Activated CD4-positive, alpha-beta T cell treated with anti-CD3 and anti-CD28 coated beads for 36 hours (primary cell): ENCODE measurements at regions of chrX and their contacts with region 1.

Region 1: DNA sequence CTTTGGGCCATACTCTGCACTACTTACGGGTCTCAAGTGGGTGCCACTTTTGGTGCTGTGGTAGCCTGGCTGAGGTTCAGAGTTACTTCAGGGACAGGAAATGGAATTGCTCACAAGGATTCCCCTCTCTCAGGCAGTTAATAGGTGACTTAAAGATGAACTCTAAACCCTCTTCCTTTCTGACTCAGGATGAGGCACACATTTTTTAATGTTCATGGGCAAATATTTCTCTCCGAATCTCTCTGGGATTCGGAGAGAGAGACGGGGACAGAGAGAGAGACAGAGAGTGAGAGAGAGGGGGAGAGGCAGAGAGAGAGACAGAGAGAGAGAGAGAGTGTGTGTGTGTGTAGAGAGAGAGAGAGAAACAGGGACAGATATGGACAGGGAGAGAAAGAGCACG is 79.8 kb downstream of the NYX start:
- DNase-seq: peak; percentile 11
- ATAC-seq: peak; percentile 72
- H3K4me3 Mint-ChIP-seq: no peak overlapping the region
- H3K27ac Mint-ChIP-seq: peak overlapping the region; percentile 77
- H3K4me1 Mint-ChIP-seq: peaks cover 10% of the 10 kb centered on the region
- H3K27me3 Mint-ChIP-seq: no peaks in the 10 kb centered on the region

Region 2: GRCh38 chrX:41293269-41293668 is 233.7 kb before region 1 on chrX:
- CTCF ChIA-PET with region 1: no interaction called
- POLR2A ChIA-PET with region 1: no interaction called
- intact Hi-C with region 1: no loop called
- DNase-seq: peak; percentile 33
- ATAC-seq: peak; percentile 57
- H3K4me3 Mint-ChIP-seq: no peak overlapping the region
- H3K27ac Mint-ChIP-seq: no peak overlapping the region
- H3K4me1 Mint-ChIP-seq: no peaks in the 10 kb centered on the region
- H3K27me3 Mint-ChIP-seq: no peaks in the 10 kb centered on the region

Region 3: DNA sequence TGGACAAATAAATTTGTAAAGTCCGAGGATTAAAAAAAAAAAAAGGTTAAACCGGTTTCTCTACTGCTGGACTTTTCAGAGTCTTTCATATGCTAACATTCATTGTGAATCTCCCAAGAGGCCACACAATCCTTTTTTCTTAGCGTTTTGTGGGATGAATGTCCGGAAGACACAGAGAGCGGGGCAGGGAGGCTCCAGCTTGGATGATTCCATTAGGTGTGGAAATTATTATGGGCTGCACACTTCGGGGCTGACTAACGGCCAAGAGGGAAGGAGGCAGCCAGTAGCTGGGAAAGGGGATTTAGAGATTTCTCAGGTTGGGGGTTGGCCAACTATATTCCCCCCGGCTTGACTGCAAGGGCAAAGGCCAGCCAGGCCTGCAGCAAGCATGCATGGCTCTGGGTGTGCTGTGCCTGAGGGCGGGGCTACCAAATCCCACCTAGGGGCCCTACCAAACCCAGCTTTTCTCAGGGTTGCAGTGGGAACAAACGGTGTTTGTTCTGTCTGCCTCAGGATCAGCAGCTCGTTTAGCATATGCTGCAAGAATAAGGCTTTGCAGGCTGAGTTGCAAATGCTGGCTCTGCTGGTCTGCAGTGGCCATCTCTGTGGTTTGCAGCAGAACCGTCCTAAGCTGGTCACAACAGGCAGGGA is 51.2 kb before region 1 on chrX:
- CTCF ChIA-PET with region 1: no interaction called
- POLR2A ChIA-PET with region 1: no interaction called
- intact Hi-C with region 1: loop called in 1 of 2 experiments (anchors 5 kb)
- DNase-seq: no peak
- ATAC-seq: no peak
- H3K4me3 Mint-ChIP-seq: no peak overlapping the region
- H3K27ac Mint-ChIP-seq: no peak overlapping the region
- H3K4me1 Mint-ChIP-seq: peaks cover 3% of the 10 kb centered on the region
- H3K27me3 Mint-ChIP-seq: no peaks in the 10 kb centered on the region